SK-N-SH (cell line): ENCODE measurements at regions of chr12 and their contacts with region 1.

Region 1: DNA sequence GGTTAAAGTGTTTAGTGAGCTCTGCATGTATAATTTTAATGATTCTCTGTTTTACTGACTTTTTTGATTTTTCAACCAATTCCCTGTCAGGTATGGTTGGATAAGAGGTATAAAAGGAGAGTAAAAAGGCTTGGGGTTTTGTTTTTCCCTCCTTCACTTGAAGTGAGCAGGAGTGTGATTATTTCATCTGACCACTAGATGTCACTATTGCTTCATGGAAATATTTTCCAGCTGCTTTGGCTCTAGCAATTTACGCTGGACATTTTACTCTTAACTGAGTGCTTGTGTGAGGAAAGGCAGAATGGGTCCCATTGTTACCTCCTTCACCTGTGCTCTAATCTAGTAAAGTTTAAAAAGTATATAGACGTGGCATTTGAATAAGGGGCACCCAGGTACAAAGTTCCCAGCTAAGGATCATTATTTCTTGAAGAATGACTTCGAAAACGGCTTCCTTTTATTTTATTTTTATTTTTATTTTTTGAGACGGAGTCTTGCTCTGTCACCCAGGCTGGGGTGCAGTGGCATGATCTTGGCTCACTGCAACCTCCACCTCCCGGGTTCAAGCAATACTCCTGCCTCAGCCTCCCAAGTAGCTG is 66.5 kb downstream of the TBC1D30 start:
- DNase-seq: peak; percentile 54
- H3K4me3 ChIP-seq: no peak overlapping the region; a peak in 1 of 4 replicates
- H3K27ac ChIP-seq: no peak overlapping the region
- H3K4me1 ChIP-seq: no peaks in the 10 kb centered on the region; a peak in 1 of 4 replicates
- H3K27me3 ChIP-seq: no peaks in the 10 kb centered on the region
- CTCF ChIP-seq: peak; percentile 80
- EP300 ChIP-seq: no peak
- RAD21 ChIP-seq: peak; percentile 95

Region 2: GRCh38 chr12:64796208-64796845 is 94.6 kb before region 1 on chr12:
- CTCF ChIA-PET with region 1: interaction called, 12 read pairs
- POLR2A ChIA-PET with region 1: no interaction called
- DNase-seq: peak; percentile 52
- H3K4me3 ChIP-seq: peak overlapping the region in 1 of 2 experiments; percentile 5; a peak in 1 of 4 replicates
- H3K27ac ChIP-seq: no peak overlapping the region
- H3K4me1 ChIP-seq: no peaks in the 10 kb centered on the region
- H3K27me3 ChIP-seq: peaks cover 17% of the 10 kb centered on the region; the same call in 1 of the 2 replicates
- CTCF ChIP-seq: peak; percentile 91
- EP300 ChIP-seq: no peak
- RAD21 ChIP-seq: peak; percentile 68

Region 3: DNA sequence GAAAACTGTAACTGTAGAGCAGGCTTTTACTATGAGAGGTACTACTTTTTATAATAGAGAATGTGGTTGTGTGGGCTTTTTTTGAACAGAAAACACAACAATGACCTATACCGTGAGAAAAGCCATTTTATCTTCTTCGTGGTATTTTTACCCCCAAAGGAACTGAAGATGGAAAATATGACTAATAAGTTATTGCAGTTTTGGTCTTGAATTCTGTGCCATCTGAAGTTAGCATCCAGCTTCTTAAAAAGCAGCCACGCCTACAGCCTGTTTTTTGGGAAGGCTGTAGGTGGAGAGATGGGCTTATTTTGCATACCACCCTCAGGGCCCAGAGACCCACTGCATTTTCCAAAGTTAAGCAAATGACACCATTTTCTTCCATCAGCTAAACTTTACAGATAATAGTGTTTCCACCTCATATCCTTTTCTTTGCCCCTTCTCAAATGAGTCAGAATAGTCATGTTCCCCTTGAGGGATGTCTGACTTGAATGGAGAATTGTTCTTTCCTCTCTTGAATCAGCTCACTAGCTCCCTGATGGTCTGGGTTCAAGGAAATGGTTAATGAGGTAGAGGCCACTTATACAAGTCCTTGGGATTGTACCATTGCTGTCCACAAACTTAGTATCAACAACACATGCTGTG is 13.5 kb before region 1 on chr12:
- CTCF ChIA-PET with region 1: interaction called, 18 read pairs
- POLR2A ChIA-PET with region 1: no interaction called
- DNase-seq: no peak
- H3K4me3 ChIP-seq: no peak overlapping the region
- H3K27ac ChIP-seq: no peak overlapping the region
- H3K4me1 ChIP-seq: no peaks in the 10 kb centered on the region
- H3K27me3 ChIP-seq: peaks cover 17% of the 10 kb centered on the region; the same call in 1 of the 2 replicates
- CTCF ChIP-seq: no peak
- EP300 ChIP-seq: no peak
- RAD21 ChIP-seq: no peak

Region 4: GRCh38 chr12:64923536-64923935 is 32.6 kb after region 1 on chr12:
- CTCF ChIA-PET with region 1: interaction called, 10 read pairs
- POLR2A ChIA-PET with region 1: no interaction called
- DNase-seq: no peak
- H3K4me3 ChIP-seq: no peak overlapping the region
- H3K27ac ChIP-seq: no peak overlapping the region
- H3K4me1 ChIP-seq: no peaks in the 10 kb centered on the region
- H3K27me3 ChIP-seq: peaks cover 11% of the 10 kb centered on the region; the same call in 1 of the 2 replicates
- CTCF ChIP-seq: no peak
- EP300 ChIP-seq: no peak
- RAD21 ChIP-seq: no peak

Region 5: DNA sequence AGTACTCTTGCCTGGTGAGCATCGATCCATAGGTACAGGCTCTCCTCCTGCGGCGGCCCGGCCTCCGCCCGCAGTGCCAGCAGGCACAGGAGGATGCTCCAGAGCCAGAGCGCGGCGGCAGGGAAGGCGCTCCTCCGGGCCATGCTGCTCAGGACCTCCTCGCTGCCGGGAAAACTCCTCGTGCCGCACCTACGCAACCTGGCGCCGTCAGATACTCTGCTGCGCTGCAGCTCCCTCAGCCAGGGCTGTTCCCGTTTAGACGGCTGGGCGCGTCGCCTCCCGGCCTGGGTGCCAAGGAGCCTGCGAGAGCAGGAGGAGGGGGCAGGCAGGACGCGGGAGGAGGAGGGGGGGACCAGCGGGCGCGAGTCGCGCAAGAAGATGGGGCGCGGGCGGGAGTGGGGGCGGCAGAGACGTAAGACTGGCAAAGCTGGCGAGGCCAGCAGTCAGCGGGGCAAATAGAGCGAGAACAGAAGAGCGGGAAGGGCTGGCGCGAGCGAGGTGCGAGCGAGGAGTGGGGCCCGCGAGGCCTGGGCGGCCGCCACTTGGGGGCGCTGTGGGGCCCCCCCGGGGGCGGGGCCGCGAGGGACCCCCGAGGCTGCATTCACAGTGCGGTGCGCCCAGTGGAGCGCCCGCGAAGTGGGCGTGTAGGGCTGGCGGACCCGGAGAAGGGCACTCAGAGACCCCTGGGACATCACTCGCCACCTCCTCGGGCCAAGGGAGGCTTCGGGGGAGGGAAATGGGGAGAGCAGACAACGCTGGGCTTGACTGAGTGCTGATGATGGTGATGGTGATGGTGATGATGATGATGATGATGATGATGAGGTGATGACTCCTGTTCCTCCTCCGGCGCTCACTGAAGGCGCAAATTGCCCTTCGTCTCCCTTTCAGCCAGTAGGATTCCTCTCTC is 230.3 kb after region 1 on chr12 and contains the start of gene WIF1:
- CTCF ChIA-PET with region 1: interaction called, 59 read pairs
- POLR2A ChIA-PET with region 1: no interaction called
- DNase-seq: peak; percentile 69
- H3K4me3 ChIP-seq: peak within 1 kb of the TSS; percentile 14 to 37; a peak in 3 of 4 replicates
- H3K27ac ChIP-seq: no peak within 1 kb of the TSS
- H3K4me1 ChIP-seq: no peaks in the 10 kb centered on the region; a peak in 1 of 4 replicates
- H3K27me3 ChIP-seq: peaks cover 68% of the 10 kb centered on the region
- CTCF ChIP-seq: peak; percentile 56
- EP300 ChIP-seq: no peak
- RAD21 ChIP-seq: no peak
- polyA plus RNA-seq, gene WIF1: not detected in 2 replicates